Gastrocnemius medialis (tissue), 4 donors: ENCODE measurements at regions of chr1 and their contacts with region 1.

Region 1: DNA sequence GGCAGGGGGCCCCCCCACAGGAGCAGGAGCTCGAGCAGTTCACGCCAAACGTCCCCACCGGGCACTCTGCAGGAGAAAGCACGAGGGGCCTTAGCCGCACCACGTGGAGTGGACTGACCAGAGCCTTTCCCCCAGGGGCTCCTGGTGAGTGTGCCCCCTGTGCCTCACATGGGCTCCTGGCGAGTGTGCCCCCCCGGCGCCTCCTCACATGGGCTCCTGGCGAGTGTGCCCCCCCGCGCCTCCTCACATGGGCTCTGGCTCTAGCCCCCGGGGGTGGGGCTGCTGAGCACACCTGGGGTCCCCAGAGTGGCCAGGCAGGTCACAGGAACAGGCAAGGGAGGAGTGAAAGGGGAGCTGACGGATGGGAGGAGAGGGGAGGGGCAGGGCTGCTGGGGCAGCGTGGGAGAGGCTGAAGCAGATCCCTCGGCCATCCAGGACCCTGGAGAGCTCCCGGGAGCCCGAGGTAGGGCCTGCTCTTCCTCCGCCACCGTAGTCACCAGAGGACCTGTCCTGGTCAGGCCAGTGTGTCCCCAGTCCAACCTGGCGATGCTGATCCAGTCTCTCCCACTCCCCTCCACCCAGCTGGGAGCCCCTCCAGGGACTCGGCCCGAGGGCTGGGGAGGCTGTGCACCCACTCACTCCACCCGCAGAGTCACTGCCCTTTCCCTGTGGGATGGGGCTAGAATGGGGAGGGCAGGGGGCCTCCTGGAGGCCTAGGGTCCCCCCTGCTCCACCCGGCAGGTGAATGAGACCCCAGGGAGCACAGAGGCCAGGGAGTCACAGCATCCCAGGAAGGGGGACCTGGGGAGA is 47.6 kb downstream of the ARHGEF16 start:
- DNase-seq: peak; percentile 22 to 63
- ATAC-seq: no peak
- H3K4me3 ChIP-seq: no peak overlapping the region
- H3K27ac ChIP-seq: no peak overlapping the region
- H3K4me1 ChIP-seq: peaks cover 19 to 31% of the 10 kb centered on the region in 2 donors
- H3K27me3 ChIP-seq: no peaks in the 10 kb centered on the region
- CTCF ChIP-seq: no peak
- POLR2A ChIP-seq: no peak

Region 2: GRCh38 chr1:3219005-3219790 is 282.9 kb before region 1 on chr1:
- in situ Hi-C with region 1: no loop called
- intact Hi-C with region 1: no loop called
- DNase-seq: peak in 1 of 2 donors; percentile 17
- ATAC-seq: no peak
- H3K4me3 ChIP-seq: peak overlapping the region in 2 of 4 donors; percentile 13 to 28
- H3K27ac ChIP-seq: no peak overlapping the region
- H3K4me1 ChIP-seq: peaks cover 12% of the 10 kb centered on the region in 2 donors
- H3K27me3 ChIP-seq: peaks cover 20 to 31% (median 22%) of the 10 kb centered on the region in 3 donors
- CTCF ChIP-seq: no peak
- POLR2A ChIP-seq: no peak

Region 3: DNA sequence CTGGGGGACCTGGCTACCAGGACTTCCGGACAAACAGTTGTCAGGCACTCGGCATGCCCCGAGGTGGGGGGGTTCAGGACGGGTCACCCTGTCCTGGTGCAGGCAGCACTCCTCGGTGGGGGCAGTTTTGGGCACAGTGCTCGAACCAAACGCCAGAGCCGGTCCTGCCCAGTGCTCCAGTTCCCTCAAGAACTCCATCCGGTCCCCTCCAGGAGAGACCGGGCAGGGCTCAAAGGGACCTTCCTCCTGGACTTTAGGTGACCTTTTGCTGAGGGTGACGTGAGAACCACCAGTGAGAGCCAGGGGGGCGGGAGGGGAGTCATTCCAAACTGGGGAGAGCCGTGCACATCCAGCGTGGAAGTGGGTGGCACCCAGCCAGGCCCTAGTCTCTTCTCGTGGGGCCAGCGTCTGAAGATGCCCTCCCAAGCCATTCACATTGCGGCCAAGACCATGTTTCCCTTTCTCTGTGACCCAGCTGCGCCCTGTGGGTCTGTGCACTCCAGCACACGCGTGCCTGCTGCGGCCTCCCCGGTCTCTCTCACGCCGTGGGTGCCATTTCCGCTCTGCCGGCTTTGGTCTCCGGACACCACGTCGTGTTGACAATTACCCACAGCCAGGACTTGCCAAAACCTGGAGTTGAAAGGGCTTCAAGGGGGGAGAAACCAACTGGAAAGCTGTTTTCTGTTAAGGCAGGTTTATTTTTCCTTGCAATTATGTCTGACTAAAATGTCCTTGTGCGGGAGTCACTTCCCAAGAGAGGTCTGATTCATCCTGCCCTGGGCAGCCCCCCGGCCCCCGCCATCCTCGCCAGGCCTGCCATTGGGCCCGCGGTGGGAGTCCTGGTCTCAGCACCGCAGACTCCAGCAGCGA is 226.4 kb before region 1 on chr1:
- in situ Hi-C with region 1: no loop called
- intact Hi-C with region 1: no loop called
- DNase-seq: no peak
- ATAC-seq: no peak
- H3K4me3 ChIP-seq: no peak overlapping the region
- H3K27ac ChIP-seq: no peak overlapping the region
- H3K4me1 ChIP-seq: no peaks in the 10 kb centered on the region
- H3K27me3 ChIP-seq: peaks cover 0 to 7% (median 7%) of the 10 kb centered on the region in 3 donors
- CTCF ChIP-seq: no peak
- POLR2A ChIP-seq: no peak

Region 4: DNA sequence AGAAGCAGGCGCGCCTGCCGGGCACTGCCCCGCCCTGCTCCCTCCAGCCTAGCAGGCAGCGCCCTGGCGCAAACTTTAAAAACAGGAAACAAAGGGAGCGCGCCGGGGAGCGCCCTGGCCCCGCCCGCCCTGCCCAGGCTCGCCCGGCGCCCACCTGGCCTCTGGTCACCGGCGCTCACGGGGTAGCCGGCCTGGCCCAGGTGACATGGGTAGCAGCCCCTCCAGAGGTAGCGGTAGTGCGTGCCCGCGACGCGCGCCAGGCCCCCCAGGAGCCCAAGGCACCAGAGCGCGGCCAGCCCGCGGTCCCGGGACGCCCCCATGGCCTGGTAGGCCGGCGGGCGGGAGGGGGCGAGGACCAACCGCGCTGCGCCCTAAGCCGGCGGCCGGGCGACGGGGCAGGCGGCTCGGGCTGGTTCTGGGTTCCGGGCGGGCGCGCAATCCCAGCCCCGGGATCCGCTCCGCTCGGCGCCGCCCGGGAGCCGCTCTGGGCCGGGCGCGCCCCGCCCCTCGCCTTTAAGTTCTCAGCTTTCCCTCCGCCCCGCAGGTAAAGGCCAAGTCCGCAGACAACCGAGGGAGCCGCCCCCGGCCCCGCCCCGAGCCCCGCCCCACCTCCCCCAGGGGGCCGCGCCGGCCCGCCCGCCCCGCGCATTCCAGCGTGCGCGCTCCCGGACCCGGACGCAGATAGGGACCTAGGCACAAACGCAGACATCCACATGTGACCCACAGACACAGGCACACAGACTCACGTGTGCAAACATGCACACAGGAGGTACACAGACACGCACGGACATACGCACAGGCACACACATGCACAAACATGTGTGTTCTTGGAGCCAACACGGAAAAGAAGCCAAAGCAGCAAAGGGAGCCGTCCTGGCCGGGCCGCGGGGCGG is 29.1 kb after region 1 on chr1:
- in situ Hi-C with region 1: no loop called
- intact Hi-C with region 1: loop called (anchors 1 kb)
- DNase-seq: peak; percentile 60 to 70
- ATAC-seq: peak; percentile 61 to 68
- H3K4me3 ChIP-seq: peak overlapping the region; percentile 60 to 78 (median 69)
- H3K27ac ChIP-seq: peak overlapping the region; percentile 70 to 90 (median 82)
- H3K4me1 ChIP-seq: peaks cover 20 to 34% of the 10 kb centered on the region in 2 donors
- H3K27me3 ChIP-seq: no peaks in the 10 kb centered on the region
- CTCF ChIP-seq: no peak
- POLR2A ChIP-seq: peak; percentile 96 to 97

Region 5: GRCh38 chr1:3668585-3669300 is 166.7 kb after region 1 on chr1:
- in situ Hi-C with region 1: no loop called
- intact Hi-C with region 1: loop called (anchors 5 kb)
- DNase-seq: peak; percentile 83 to 88
- ATAC-seq: peak; percentile 91 to 92
- H3K4me3 ChIP-seq: no peak overlapping the region
- H3K27ac ChIP-seq: peak overlapping the region; percentile 38 to 72 (median 50)
- H3K4me1 ChIP-seq: peaks cover 7 to 9% of the 10 kb centered on the region in 2 donors
- H3K27me3 ChIP-seq: peaks cover 0 to 5% (median 0%) of the 10 kb centered on the region in 3 donors
- CTCF ChIP-seq: no peak
- POLR2A ChIP-seq: no peak

Region 6: DNA sequence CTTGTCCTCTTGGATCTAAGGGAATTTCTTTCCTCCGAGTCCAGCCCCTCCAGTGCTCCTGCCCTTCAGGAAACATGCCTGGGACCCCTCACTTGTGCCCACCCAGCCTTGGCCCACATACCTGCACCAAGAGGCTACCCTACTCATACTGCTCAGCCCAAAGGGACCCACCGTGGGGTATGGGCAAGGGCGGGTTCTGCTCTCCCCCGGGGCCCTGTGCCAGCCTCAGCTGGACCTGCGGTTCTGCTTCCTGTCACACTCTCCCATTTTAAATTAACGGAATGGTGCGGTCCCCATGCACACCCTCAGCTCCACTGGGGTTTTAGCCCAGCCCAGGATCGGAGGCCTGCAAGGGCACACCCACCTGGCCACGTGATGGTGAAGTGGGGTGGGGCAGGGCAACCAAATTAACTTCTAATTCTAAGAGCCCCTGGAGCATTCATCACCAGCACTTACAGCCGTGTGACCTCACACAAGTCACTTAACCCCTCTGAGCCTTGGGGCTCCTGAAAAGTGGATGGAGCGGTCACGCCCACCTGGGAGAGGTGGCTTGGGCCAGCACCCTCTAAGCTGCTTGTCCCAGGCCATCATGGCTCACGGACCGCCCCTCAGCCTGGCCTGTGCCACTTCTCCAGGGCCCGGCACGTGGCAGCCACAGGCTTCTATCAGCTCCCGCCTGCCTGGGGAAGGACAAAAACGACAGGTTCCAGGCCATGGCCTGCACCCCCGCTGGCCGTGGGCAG is 178.6 kb after region 1 on chr1:
- in situ Hi-C with region 1: no loop called
- intact Hi-C with region 1: no loop called
- DNase-seq: no peak
- ATAC-seq: no peak
- H3K4me3 ChIP-seq: no peak overlapping the region
- H3K27ac ChIP-seq: no peak overlapping the region
- H3K4me1 ChIP-seq: no peaks in the 10 kb centered on the region
- H3K27me3 ChIP-seq: peaks cover 0 to 4% (median 0%) of the 10 kb centered on the region in 3 donors
- CTCF ChIP-seq: no peak
- POLR2A ChIP-seq: no peak